Heart right ventricle (tissue), 16 donors: ENCODE measurements at regions of chr6 and their contacts with region 1.

Region 1: DNA sequence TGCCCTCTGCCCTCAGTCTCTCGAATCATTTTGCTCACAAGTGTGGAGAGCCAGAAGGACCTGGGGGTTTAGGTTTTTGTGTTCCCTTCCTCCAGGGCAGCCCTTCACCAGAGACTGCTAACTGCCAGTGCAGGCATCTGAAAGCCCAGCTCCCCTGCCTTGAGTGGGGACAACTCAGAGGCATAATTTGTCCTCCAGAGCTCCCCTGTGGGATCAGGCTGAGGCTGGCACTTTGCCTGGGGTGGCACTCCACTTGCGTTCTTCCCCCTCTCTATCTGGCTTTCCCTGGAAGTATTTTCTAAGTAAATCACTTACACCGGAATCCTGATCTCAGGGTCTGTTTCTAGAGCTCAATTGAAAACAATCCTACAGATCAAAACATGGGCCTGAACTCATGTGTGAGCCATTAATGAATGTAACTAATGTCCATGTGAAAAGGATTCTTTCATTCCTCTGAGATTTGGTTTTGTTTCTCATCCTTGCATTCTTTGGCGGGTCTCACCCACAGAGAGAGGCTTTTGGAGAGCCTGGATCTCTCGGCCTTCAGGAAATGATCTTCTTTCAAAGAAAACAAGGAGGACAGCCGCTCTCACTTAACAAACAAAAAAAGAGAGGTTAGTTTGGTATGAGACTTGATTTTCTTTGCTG is 125.7 kb upstream of the RIPOR2 start:
- DNase-seq: peak in 1 of 2 donors; percentile 18
- ATAC-seq: peak in 2 of 8 donors; percentile 11 to 15
- H3K4me3 ChIP-seq: no peak overlapping the region
- H3K27ac ChIP-seq: peak overlapping the region in 2 of 10 donors; percentile 3 to 37
- H3K4me1 ChIP-seq: peaks cover 0 to 24% (median 0%) of the 10 kb centered on the region in 9 donors
- H3K27me3 ChIP-seq: no peaks in the 10 kb centered on the region
- CTCF ChIP-seq: no peak

Region 2: GRCh38 chr6:24774696-24775519 is 286.5 kb before region 1 on chr6 and contains the start of gene GMNN:
- intact Hi-C with region 1: loop called in 1 of 10 experiments (anchors 10 kb)
- DNase-seq: peak; percentile 99
- ATAC-seq: peak; percentile 97 to 100 (median 99)
- H3K4me3 ChIP-seq: peak within 1 kb of the TSS; percentile 82 to 98 (median 91)
- H3K27ac ChIP-seq: peak within 1 kb of the TSS; percentile 38 to 95 (median 91)
- H3K4me1 ChIP-seq: peaks cover 0 to 41% (median 10%) of the 10 kb centered on the region in 9 donors
- H3K27me3 ChIP-seq: no peaks in the 10 kb centered on the region
- CTCF ChIP-seq: peak in 1 of 9 donors; percentile 13
- total RNA-seq, gene GMNN: 3.1 to 10.9 (median 6.8) TPM